K562 (cell line): ENCODE measurements at regions of chr4 and their contacts with region 1.

Region 1: GRCh38 chr4:117512414-117512813 is 427.0 kb upstream of the TRAM1L1 start:
- DNase-seq: no peak
- ATAC-seq: no peak
- H3K4me3 ChIP-seq: no peak overlapping the region
- H3K27ac ChIP-seq: no peak overlapping the region
- H3K4me1 ChIP-seq: no peaks in the 10 kb centered on the region
- H3K27me3 ChIP-seq: no peaks in the 10 kb centered on the region
- CTCF ChIP-seq: no peak
- EP300 ChIP-seq: no peak
- POLR2A ChIP-seq: no peak
- RAD21 ChIP-seq: no peak

Region 2: DNA sequence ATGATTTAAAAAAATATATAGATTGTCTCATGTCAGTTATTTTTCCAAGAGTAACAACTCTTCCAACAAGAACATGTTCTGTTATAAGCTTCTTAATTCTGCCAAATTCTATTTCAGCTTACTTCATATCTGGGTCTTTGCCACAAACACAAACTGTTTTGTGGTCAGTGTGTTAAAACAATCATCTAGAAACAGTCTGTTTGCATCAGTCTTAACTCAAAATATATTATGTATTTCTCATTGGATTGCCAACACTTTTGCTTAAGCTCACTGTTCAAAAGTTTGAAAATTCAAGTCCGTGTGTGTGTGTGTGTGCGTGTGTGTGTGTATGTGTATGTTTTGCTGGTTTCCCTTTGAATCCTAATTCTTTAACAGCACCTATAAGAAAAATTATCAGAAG is 1646.7 kb before region 1 on chr4:
- CTCF ChIA-PET with region 1: no interaction called
- POLR2A ChIA-PET with region 1: no interaction called
- in situ Hi-C with region 1: loop called (anchors 10 kb)
- intact Hi-C with region 1: no loop called
- DNase-seq: no peak
- ATAC-seq: no peak
- H3K4me3 ChIP-seq: no peak overlapping the region
- H3K27ac ChIP-seq: no peak overlapping the region
- H3K4me1 ChIP-seq: no peaks in the 10 kb centered on the region
- H3K27me3 ChIP-seq: no peaks in the 10 kb centered on the region
- CTCF ChIP-seq: no peak
- EP300 ChIP-seq: no peak
- POLR2A ChIP-seq: no peak
- RAD21 ChIP-seq: no peak

Region 3: GRCh38 chr4:117692538-117692937 is 180.1 kb after region 1 on chr4:
- CTCF ChIA-PET with region 1: no interaction called
- POLR2A ChIA-PET with region 1: no interaction called
- in situ Hi-C with region 1: no loop called
- intact Hi-C with region 1: no loop called
- DNase-seq: no peak
- ATAC-seq: no peak
- H3K4me3 ChIP-seq: no peak overlapping the region
- H3K27ac ChIP-seq: no peak overlapping the region
- H3K4me1 ChIP-seq: no peaks in the 10 kb centered on the region
- H3K27me3 ChIP-seq: no peaks in the 10 kb centered on the region
- CTCF ChIP-seq: no peak
- EP300 ChIP-seq: no peak
- POLR2A ChIP-seq: no peak
- RAD21 ChIP-seq: no peak